HEK293 (cell line): ENCODE measurements at regions of chr22 and their contacts with region 1.

Region 1: DNA sequence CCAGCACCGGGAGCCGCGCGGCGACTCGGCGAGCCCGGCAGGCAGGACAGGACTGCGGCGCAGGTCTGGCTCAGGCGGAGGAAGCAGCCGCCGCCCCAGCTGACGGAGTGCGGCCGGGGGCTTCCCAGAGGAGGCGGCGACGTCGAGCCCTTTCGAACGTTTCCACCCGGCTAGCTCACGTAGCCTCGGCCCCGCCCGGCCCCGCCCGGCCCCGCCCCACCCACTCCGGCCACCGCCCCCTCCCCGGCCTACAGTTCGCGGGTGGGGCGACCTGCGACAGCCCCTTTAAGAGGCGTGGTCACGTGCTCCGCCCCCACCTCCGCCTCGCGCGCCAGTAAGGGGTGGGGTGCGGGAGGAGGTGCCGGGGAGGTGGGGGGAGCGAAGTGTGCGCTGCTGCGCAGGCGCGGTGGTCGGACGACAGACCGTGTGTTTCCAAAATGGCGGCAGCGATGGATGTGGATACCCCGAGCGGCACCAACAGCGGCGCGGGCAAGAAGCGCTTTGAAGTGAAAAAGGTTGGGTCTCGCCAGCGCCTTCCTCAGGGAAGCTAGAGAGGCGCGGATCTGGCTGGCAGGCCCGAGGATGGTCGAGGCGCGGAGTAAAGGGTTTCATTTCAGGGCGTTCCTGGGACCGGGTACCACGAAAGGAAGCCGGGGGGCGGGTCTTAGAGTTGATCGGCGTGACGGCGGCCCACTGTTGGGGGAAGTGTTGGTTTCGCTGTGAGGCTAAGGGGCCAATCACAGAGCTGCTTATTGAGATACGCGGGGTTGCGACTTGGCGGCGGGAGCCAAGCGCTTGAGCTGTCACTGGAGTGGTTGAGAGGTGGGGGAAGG is at the start of gene RBX1:
- H3K4me3 ChIP-seq: peak within 1 kb of the TSS; percentile 100
- H3K27ac ChIP-seq: peak within 1 kb of the TSS; percentile 94
- H3K4me1 ChIP-seq: peaks cover 8% of the 10 kb centered on the region
- CTCF ChIP-seq: no peak

Region 2: DNA sequence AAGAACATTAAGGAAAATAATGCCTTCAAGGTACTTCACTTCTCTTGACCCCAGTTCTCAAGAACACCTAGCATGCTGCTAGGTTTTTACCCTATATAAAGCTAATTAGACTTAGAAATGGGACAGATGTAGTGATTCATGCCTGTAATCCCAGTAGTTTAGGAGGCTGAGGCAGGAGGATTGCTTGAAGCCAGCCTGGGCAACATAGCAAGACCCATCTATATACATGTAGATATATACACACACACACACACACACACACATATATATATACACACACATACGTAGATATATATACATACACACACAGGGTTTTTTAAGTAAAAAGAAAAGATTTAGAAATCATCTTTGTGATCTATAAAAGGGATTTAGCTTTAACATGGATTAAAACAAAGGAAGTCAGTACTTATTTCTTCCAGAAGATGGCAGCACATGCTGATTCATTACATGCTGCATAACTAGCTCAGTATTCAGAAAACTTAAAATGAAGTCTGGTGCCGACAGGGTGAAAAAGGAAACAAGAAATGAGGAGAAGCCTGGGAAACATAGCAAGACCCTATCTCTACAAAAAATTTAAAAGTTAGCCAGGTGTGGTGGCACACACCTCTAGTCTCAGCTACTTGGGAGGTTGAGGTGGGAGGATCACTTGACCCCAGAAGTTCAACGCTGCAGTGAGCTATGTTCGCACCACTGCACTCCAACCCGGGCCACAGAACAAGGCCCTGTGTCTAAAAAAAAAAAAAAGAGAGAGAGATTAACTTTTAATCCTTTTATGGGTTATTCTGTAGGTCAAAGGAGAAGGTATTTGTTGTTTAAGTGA is 28.5 kb before region 1 on chr22:
- CTCF ChIA-PET with region 1: interaction called, 10 read pairs
- POLR2A ChIA-PET with region 1: interaction called, 14 read pairs
- H3K4me3 ChIP-seq: no peak overlapping the region
- H3K27ac ChIP-seq: no peak overlapping the region
- H3K4me1 ChIP-seq: no peaks in the 10 kb centered on the region
- CTCF ChIP-seq: 0 out of 2 replicates have a peak, but pooled peaks have one; percentile 49

Region 3: GRCh38 chr22:40939202-40939601 is 12.0 kb before region 1 on chr22:
- CTCF ChIA-PET with region 1: interaction called, 3 read pairs
- POLR2A ChIA-PET with region 1: interaction called, 16 read pairs
- H3K4me3 ChIP-seq: no peak overlapping the region
- H3K27ac ChIP-seq: no peak overlapping the region
- H3K4me1 ChIP-seq: no peaks in the 10 kb centered on the region
- CTCF ChIP-seq: no peak

Region 4: DNA sequence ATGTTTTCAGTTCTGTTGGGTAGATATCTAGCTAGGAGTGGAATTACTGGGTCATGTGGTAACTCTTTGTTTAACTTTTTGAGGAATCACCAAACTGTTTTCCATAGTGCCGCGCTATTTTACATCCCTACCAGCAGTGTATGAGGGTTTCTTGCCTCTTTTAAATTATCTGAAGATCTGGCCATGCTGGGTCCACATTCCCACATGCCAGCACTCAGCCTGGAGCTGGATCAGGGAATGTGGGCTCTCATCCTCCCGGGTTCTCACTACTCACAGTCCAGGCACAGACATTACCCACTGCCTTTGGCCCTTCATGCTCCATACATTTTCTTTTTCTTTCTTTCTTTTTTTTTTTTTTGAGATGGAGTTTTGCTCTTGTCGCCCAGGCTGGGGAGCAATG is 44.7 kb after region 1 on chr22:
- CTCF ChIA-PET with region 1: no interaction called
- POLR2A ChIA-PET with region 1: interaction called, 10 read pairs
- H3K4me3 ChIP-seq: no peak overlapping the region
- H3K27ac ChIP-seq: no peak overlapping the region
- H3K4me1 ChIP-seq: no peaks in the 10 kb centered on the region
- CTCF ChIP-seq: no peak

Region 5: DNA sequence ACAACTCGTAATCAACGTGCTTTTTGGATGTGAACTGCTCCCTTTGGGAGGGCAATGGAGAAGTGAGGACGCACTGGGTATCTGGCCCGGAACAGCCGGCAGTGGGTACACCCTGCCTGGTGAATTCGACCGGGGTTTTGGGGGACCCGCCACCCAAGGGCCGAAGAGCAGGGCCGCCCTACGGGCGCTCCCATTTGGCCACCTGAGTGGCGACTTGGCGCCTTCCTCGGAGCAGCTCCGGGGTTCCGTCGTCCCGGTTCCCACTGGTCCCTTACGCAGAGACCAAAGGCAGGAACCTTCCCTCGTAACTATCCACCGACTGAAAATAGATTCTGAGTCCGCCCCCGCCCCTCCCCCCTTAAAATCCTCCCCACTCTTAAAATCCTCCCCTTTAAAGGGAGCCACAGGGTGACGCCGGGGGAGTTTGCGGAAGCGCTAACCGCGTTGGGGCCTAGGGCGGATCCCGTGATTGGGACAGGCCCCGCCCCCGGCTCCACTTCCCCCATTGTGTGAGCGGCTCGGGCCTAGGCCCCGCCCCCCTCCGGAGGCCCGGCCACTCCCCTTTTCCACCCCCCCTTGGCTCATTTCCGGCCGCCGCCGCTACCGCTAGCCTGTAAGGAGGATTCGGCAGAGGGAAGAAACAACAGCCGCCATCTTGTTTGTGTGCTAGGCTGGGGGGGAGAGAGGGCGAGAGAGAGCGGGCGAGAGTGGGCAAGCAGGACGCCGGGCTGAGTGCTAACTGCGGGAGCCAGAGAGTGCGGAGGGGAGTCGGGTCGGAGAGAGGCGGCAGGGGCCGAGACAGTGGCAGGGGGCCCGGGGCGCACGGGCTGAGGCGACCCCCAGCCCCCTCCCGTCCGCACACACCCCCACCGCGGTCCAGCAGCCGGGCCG is 140.2 kb after region 1 on chr22:
- CTCF ChIA-PET with region 1: interaction called, 3 read pairs
- POLR2A ChIA-PET with region 1: interaction called, 51 read pairs
- H3K4me3 ChIP-seq: peak overlapping the region; percentile 98
- H3K27ac ChIP-seq: peak overlapping the region; percentile 100
- H3K4me1 ChIP-seq: peaks cover 3% of the 10 kb centered on the region
- CTCF ChIP-seq: peak; percentile 37